ENCODE measurements at regions of chr5 and their contacts with region 1.

Region 1: GRCh38 chr5:65481635-65482295 is at the start of gene ADAMTS6:
- DNase-seq: peak; percentile 79
- H3K27ac ChIP-seq: peak within 1 kb of the TSS; percentile 76
- CTCF ChIP-seq: no peak

Region 2: GRCh38 chr5:64811050-64811640 is 670.6 kb before region 1 on chr5:
- CTCF ChIA-PET with region 1: interaction called, 10 read pairs
- POLR2A ChIA-PET with region 1: no interaction called
- DNase-seq: peak; percentile 50
- H3K27ac ChIP-seq: no peak overlapping the region
- CTCF ChIP-seq: peak; percentile 87

Region 3: GRCh38 chr5:65261499-65261898 is 220.3 kb before region 1 on chr5:
- CTCF ChIA-PET with region 1: no interaction called
- POLR2A ChIA-PET with region 1: no interaction called
- DNase-seq: no peak
- H3K27ac ChIP-seq: no peak overlapping the region
- CTCF ChIP-seq: no peak

Region 4: DNA sequence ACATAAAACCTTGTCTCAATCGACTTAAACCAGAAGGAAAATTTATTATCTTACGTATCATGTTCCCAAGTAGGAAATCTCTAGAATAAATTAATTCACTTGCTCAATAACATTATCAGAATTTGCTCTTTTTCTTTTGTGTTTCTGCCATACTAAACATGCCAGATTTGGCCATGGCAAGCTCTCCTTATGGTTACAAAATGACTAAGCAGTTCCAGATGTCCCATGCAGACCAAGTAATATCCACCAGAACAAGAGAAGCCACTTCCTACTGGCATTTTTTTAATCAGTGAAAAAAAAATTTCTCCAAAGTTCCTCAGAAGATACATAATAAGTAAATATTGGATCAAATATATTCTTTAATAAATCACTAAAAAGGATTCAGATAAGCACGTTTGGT is 25.2 kb after region 1 on chr5:
- CTCF ChIA-PET with region 1: interaction called, 10 read pairs
- POLR2A ChIA-PET with region 1: no interaction called
- DNase-seq: no peak
- H3K27ac ChIP-seq: no peak overlapping the region
- CTCF ChIP-seq: no peak

Region 5: GRCh38 chr5:65525726-65526125 is 44.0 kb after region 1 on chr5:
- CTCF ChIA-PET with region 1: no interaction called
- POLR2A ChIA-PET with region 1: no interaction called
- DNase-seq: no peak
- H3K27ac ChIP-seq: no peak overlapping the region
- CTCF ChIP-seq: no peak